ENCODE measurements at regions of chr7 and their contacts with region 1.

Region 1: GRCh38 chr7:44072364-44073231 is 7.2 kb upstream of the PGAM2 start:
- DNase-seq: peak; percentile 57
- ATAC-seq: no peak
- H3K4me3 ChIP-seq: no peak overlapping the region
- H3K4me3 Mint-ChIP-seq: peak overlapping the region; percentile 12
- H3K27ac ChIP-seq: peak overlapping the region; percentile 90 to 98
- H3K27ac Mint-ChIP-seq: peak overlapping the region; percentile 89
- H3K4me1 ChIP-seq: peaks cover 44 to 67% of the 10 kb centered on the region in 2 donors
- H3K4me1 Mint-ChIP-seq: peaks cover 74% of the 10 kb centered on the region
- H3K27me3 ChIP-seq: no peaks in the 10 kb centered on the region
- H3K27me3 Mint-ChIP-seq: no peaks in the 10 kb centered on the region
- CTCF ChIP-seq: peak; percentile 61

Region 2: DNA sequence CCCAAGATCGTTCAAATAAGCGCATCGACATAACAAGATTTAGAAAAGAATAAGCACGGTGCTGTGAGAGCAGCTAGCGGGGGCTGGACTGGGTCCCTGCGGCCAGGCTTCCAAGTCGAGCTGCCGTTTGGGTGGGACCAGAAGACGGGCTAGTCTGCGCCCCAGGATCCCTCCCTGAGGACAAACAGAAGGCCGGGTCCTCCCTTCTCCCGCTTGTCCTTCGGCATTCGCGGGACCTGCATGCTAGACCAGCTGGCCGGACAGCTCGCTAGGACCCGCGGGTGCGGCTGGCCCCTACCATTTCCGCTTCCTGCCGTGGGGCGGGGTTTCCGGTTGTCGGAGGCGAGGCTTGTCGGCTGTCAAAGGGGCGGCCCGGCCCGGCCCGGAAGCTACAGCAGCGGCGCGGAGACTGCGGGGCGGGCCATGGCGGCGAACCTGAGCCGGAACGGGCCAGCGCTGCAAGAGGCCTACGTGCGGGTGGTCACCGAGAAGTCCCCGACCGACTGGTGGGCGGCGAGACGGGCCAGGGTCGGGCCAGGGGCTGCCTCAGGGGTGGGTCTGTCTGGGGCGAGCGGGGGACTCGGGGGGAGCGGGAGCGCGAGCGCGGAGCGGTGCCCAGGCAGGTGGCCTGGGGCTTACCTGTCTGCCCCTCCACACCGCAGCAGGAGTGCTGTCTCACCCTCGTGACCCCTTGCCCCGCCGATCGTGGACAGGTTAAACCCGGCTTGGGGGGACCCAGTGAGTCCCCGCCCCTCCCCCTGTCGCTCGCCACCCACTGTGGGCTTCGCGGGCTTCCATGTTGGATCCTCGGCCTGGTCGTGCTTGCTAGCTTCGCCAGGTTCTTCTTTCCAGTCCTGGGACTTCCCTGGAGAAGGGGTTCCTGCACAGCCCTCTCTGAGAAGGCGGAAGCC is 28.0 kb before region 1 on chr7 and contains the start of gene DBNL:
- CTCF ChIA-PET with region 1: interaction called, 4 read pairs
- POLR2A ChIA-PET with region 1: interaction called, 5 read pairs
- intact Hi-C with region 1: loop called (anchors 1 kb)
- DNase-seq: peak; percentile 89
- ATAC-seq: peak; percentile 42
- H3K4me3 ChIP-seq: peak within 1 kb of the TSS; percentile 86 to 96 (median 91)
- H3K4me3 Mint-ChIP-seq: peak within 1 kb of the TSS; percentile 98
- H3K27ac ChIP-seq: peak within 1 kb of the TSS; percentile 83 to 96
- H3K27ac Mint-ChIP-seq: peak within 1 kb of the TSS; percentile 99
- H3K4me1 ChIP-seq: peaks cover 51 to 60% of the 10 kb centered on the region in 2 donors
- H3K4me1 Mint-ChIP-seq: peaks cover 58% of the 10 kb centered on the region
- H3K27me3 ChIP-seq: no peaks in the 10 kb centered on the region
- H3K27me3 Mint-ChIP-seq: no peaks in the 10 kb centered on the region
- CTCF ChIP-seq: no peak
- total RNA-seq, gene DBNL: 311 and 335 TPM in 2 replicates

Region 3: DNA sequence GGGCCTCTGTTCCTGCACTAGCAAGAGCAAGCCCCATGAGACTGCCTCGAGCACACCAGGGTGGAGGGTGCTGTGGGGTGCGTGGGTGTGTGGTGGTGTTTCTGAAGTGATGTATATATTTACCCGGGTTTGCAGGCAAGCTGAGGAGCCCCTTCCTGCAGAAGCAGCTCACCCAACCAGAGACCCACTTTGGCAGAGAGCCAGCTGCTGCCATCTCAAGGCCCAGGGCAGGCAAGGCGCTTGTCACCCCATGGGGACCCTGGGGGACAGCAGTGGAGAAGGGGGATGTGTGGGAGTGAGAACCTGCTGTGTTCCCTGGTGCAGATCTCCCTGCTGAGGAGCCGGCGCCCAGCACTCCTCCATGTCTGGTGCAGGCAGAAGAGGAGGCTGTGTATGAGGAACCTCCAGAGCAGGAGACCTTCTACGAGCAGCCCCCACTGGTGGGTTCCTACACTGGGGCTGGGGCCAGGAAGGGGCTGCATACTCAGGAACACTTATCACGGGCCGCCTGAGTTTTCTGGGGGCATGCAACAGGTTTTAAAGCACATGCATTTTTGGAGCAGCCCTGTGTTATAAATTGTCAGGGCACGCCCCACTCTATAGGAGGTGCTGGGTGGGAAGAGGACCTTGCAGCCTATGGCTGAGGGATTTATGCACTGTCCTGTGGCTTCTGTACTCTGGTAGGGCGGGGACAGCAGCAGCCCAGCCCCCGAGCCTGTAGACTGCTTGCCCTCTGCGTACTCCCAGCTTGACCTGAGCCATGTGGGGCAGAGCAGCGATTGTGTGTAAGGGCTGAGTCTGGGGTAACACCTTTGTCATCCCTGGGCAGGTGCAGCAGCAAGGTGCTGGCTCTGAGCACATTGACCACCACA is 13.1 kb before region 1 on chr7:
- CTCF ChIA-PET with region 1: interaction called, 5 read pairs
- POLR2A ChIA-PET with region 1: interaction called, 9 read pairs
- intact Hi-C with region 1: loop called (anchors 1 kb)
- DNase-seq: peak; percentile 83
- ATAC-seq: peak; percentile 89
- H3K4me3 ChIP-seq: peak overlapping the region in 3 of 5 experiments; percentile 7 to 15 (median 12)
- H3K4me3 Mint-ChIP-seq: peak overlapping the region; percentile 88
- H3K27ac ChIP-seq: peak overlapping the region; percentile 93 to 99
- H3K27ac Mint-ChIP-seq: peak overlapping the region; percentile 100
- H3K4me1 ChIP-seq: peaks cover 73 to 93% of the 10 kb centered on the region in 2 donors
- H3K4me1 Mint-ChIP-seq: peaks cover 75% of the 10 kb centered on the region
- H3K27me3 ChIP-seq: no peaks in the 10 kb centered on the region
- H3K27me3 Mint-ChIP-seq: no peaks in the 10 kb centered on the region
- CTCF ChIP-seq: no peak

Region 4: DNA sequence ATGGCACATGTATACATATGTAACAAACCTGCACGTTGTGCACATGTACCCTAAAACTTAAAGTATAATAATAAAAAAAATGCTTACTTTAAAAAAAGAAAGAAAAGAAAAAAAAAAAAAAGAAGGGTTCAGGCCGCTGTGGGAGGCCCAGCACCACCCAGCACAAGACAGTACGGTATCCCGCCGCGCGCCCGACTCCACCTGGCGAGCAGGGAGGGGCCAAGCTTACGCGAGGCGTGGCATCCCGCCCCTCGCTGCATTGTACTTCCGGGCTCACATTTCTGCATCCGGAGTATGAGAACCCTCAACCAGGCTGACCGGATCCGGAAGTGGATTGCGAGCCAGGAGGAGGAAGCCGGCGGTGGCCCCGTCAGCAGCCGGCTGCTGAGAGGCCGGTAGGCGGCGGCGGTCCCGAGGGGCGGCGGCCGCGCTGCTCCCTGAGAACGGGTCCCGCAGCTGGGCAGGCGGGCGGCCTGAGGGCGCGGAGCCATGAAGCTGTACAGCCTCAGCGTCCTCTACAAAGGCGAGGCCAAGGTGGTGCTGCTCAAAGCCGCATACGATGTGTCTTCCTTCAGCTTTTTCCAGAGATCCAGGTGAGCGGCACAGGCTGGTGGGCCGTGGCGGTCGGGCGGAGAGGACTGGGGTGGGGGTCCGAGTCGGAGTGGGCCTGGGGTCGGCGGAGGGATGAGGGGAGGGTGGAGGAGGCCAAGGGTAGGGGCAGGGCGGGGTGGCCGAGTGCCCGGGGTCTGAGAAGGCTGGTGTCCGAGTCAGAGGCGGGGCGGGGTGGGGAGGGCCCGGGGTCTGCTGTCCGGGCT is 128.3 kb after region 1 on chr7 and contains the start of gene YKT6:
- CTCF ChIA-PET with region 1: interaction called, 6 read pairs
- POLR2A ChIA-PET with region 1: no interaction called
- intact Hi-C with region 1: loop called (anchors 1 kb)
- DNase-seq: peak; percentile 96
- ATAC-seq: peak; percentile 97
- H3K4me3 ChIP-seq: peak within 1 kb of the TSS; percentile 41 to 81 (median 70)
- H3K4me3 Mint-ChIP-seq: peak within 1 kb of the TSS; percentile 88
- H3K27ac ChIP-seq: peak within 1 kb of the TSS; percentile 47 to 77
- H3K27ac Mint-ChIP-seq: peak within 1 kb of the TSS; percentile 74
- H3K4me1 ChIP-seq: peaks cover 7 to 11% of the 10 kb centered on the region in 2 donors
- H3K4me1 Mint-ChIP-seq: peaks cover 23% of the 10 kb centered on the region
- H3K27me3 ChIP-seq: no peaks in the 10 kb centered on the region
- H3K27me3 Mint-ChIP-seq: peaks cover 11% of the 10 kb centered on the region
- CTCF ChIP-seq: peak; percentile 56
- total RNA-seq, gene YKT6: 62.3 and 73.4 TPM in 2 replicates